IMR-90 (cell line): ENCODE measurements at regions of chr21 and their contacts with region 1.

Region 1: DNA sequence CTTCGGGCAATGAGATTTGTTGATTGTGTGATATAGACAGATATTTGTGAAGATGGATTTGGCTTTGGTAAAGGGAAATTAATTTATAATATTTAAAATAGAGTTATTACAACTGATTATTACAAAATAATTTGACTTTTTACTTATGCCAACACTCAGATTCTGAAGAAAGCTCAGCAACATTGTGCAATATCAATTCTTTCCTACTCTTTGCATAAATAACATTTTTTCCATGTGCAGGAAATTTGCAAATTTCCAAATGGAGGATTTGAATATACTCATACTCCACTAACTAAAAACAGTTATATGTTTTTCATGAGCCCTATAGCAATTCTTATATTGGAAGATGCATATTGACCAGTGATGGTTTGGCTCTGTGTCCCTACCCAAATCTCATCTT is 676.4 kb upstream of the ADAMTS5 start:
- DNase-seq: no peak
- ATAC-seq: no peak
- H3K4me3 ChIP-seq: no peak overlapping the region
- H3K27ac ChIP-seq: no peak overlapping the region
- H3K4me1 ChIP-seq: no peaks in the 10 kb centered on the region; the same call in 1 of the 2 replicates
- H3K27me3 ChIP-seq: no peaks in the 10 kb centered on the region
- CTCF ChIP-seq: no peak
- POLR2A ChIP-seq: no peak
- RAD21 ChIP-seq: no peak

Region 2: GRCh38 chr21:27674041-27674615 is 30.8 kb after region 1 on chr21:
- CTCF ChIA-PET with region 1: no interaction called
- POLR2A ChIA-PET with region 1: no interaction called
- dilution Hi-C with region 1: no loop called
- in situ Hi-C with region 1: no loop called
- intact Hi-C with region 1: loop called (anchors 2 kb)
- DNase-seq: peak; percentile 88
- ATAC-seq: peak; percentile 57
- H3K4me3 ChIP-seq: no peak overlapping the region
- H3K27ac ChIP-seq: no peak overlapping the region
- H3K4me1 ChIP-seq: no peaks in the 10 kb centered on the region; the same call in 1 of the 2 replicates
- H3K27me3 ChIP-seq: no peaks in the 10 kb centered on the region
- CTCF ChIP-seq: no peak
- POLR2A ChIP-seq: no peak
- RAD21 ChIP-seq: no peak